ENCODE measurements at regions of chr10 and their contacts with region 1.

Region 1: GRCh38 chr10:110354322-110354766 is 49.6 kb upstream of the SMNDC1 start:
- H3K4me3 ChIP-seq: no peak overlapping the region
- H3K27ac ChIP-seq: no peak overlapping the region
- H3K4me1 ChIP-seq: no peaks in the 10 kb centered on the region
- CTCF ChIP-seq: peak; percentile 63

Region 2: GRCh38 chr10:110260746-110261477 is 93.4 kb before region 1 on chr10:
- CTCF ChIA-PET with region 1: no interaction called
- POLR2A ChIA-PET with region 1: no interaction called
- H3K4me3 ChIP-seq: no peak overlapping the region
- H3K27ac ChIP-seq: no peak overlapping the region
- H3K4me1 ChIP-seq: peaks cover 15% of the 10 kb centered on the region; the same call in 1 of the 2 replicates
- CTCF ChIP-seq: no peak

Region 3: DNA sequence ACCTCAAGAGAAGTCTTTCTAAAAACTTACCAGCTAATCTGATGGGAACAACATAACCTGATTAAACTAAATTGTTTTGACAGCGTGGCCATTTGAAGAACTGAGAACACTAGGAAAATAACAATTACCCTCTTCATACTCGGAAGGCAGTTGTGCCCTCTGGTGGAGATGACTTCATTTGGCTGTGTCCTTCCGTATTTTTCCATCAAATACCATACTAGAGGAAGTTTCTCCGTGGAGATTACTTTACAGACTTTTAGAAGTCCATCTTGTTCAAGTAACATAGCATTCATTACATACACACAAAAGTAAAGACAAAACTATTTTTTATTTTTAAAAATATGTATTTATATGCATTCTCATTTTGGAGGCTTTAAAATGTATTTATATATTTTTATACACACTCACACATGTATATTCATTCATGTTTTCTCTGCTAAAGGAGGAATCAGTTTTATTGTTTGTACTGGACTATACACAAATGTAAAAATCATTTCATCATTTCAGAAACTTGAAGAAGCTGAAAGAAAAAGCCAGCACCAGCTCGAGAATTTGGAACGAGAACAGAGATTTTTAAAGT is 74.8 kb before region 1 on chr10:
- CTCF ChIA-PET with region 1: no interaction called
- POLR2A ChIA-PET with region 1: no interaction called
- H3K4me3 ChIP-seq: no peak overlapping the region
- H3K27ac ChIP-seq: no peak overlapping the region
- H3K4me1 ChIP-seq: peaks cover 11% of the 10 kb centered on the region
- CTCF ChIP-seq: peak; percentile 65; the same call in 1 of the 2 replicates

Region 4: GRCh38 chr10:110368002-110368401 is 13.7 kb after region 1 on chr10:
- CTCF ChIA-PET with region 1: interaction called, 28 read pairs
- POLR2A ChIA-PET with region 1: no interaction called
- H3K4me3 ChIP-seq: no peak overlapping the region
- H3K27ac ChIP-seq: no peak overlapping the region
- H3K4me1 ChIP-seq: no peaks in the 10 kb centered on the region
- CTCF ChIP-seq: no peak

Region 5: DNA sequence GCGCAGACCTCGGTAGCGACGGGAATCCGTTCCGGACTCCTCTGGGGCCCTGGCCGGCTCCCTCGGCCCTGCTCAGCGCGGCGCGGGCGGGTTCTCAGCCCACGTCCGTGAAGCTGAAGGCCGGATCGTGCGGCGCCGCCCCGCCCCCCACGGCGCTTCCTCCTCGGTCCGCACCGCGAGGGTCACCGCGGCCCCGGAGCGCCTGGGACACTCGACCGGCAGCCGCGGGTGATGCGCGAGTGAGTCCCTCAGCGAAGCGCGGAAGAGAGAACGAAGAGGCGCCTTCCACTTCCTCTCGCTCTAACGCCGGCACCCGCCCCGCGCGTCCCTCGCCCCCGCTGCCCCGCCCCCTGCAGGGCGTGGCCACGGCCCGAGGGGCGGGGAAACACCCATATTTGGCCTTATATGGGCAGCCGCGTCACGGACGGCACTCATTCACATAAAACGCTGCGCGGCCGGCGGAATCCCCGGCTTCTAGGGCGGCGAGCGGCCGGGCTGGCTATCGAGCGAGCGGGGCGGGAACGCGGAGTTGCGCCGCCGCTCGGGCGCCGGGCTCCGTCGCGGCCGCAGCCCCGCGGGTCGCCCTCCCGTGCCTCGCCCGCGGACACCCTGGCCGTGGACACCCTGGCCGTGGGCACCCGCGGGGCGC is 143.2 kb after region 1 on chr10 and contains the start of gene DUSP5:
- CTCF ChIA-PET with region 1: interaction called, 25 read pairs
- POLR2A ChIA-PET with region 1: interaction called, 3 read pairs
- H3K4me3 ChIP-seq: peak within 1 kb of the TSS; percentile 63
- H3K27ac ChIP-seq: peak within 1 kb of the TSS; percentile 78
- H3K4me1 ChIP-seq: peaks cover 32% of the 10 kb centered on the region
- CTCF ChIP-seq: no peak

Measured in HEK293 (cell line).